Head of caudate nucleus (tissue), 42 donors: ENCODE measurements at regions of chr7 and their contacts with region 1.

Region 1: GRCh38 chr7:191981-192649 is at the start of gene FAM20C:
- DNase-seq: peak; percentile 65 to 96 (median 92)

Region 2: DNA sequence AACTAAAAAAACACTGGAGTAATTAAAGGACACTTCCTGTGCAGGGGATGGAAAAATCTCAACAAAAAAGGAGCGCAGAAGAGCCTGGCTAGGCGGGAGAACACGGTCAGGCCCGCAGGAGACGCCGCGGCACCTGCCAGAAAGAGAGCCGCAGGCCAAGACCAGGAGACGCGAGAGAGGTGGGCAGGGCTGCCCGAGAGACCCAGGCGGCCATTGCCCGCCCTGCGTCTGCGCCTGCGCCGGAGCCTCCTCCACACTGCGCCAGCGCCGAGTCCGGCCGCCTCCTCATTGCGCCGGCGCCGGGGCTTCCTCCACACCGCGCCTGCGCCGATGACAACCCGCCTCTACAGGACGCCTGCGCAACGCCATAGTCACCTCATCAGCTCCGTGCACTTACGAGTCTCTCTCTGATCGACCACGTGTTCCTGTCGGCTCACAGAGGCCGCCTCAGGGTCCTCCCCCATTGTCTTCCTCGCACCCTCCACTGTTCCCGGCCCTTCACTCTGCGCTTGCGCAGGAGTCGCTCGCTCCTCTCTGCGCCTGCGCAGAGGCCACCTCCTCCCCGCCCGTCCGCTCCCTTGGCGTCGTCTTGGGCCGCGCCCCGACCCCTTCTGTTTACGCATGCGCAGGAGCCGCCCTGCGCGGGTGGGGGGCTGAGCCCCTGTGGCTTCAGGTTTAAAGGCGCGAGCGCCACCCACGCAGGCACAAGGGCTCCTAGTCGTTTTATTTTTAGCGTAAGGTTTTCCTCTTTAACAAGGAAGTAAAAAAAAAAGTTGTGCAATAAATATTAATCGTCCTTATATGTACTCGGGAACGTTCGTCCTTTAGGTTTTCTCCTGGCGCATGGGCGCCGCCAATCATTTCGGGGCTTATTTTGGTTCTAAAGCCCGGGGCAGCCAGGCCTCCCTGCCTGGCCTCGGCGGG is 42.9 kb before region 1 on chr7:
- intact Hi-C with region 1: loop called (anchors 5 kb)
- DNase-seq: peak; percentile 90 to 99 (median 96)

Region 3: GRCh38 chr7:353746-354325 is 161.7 kb after region 1 on chr7:
- intact Hi-C with region 1: no loop called
- DNase-seq: peak in 40 of 42 donors; percentile 9 to 86 (median 56)